GM10248 (cell line): ENCODE measurements at regions of chr5 and their contacts with region 1.

Region 1: DNA sequence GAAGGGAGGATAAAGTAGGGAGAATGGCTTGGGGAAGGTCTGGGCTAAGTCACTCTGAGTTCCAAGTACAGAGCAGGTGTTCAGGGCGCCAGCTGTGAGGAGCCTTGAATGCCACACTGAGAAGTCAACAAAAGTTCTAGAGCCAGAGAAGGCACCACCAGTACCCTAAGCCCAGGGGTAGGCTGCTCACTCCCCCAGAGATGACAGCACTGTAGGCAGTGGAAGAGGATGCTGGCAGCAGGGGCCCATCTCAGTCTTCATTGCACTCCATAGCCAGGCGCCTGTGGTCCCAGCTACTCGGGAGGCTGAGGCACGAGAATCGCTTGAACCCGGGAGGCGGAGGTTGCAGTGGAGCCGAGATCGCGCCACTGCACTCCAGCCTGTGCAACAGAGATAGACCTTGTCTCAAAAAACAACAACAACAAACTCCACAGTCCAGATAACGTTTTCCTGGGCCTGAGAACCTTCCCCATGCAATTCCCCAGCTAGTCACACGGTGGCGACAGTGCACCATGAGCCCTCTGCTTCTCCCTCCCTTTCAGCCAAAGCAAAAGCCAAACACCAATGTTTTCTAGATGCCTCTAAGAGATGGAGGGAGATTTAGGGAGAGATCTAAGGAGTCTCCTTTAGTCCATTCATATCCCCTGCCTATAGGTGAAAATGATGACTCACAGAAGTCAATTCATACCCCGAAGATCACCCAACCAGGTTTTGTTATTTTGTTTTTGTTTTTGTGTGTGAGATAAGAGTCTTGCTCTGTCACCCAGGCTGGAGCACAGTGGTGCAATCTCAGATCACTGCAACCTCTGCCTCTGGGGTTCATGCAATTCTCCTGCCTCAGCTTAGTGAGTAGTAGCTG is 19.8 kb upstream of the NSD1 start:
- DNase-seq: peak; percentile 91
- CTCF ChIP-seq: peak; percentile 97

Region 2: GRCh38 chr5:177077335-177077734 is 36.5 kb before region 1 on chr5:
- CTCF ChIA-PET with region 1: interaction called, 112 read pairs
- POLR2A ChIA-PET with region 1: no interaction called
- DNase-seq: no peak
- CTCF ChIP-seq: no peak

Region 3: GRCh38 chr5:177124486-177124991 is 10.7 kb after region 1 on chr5:
- CTCF ChIA-PET with region 1: interaction called, 26 read pairs
- POLR2A ChIA-PET with region 1: no interaction called
- DNase-seq: peak; percentile 54
- CTCF ChIP-seq: no peak

Region 4: GRCh38 chr5:177311723-177312648 is 198.2 kb after region 1 on chr5 and contains the start of gene MXD3:
- CTCF ChIA-PET with region 1: interaction called, 47 read pairs
- POLR2A ChIA-PET with region 1: no interaction called
- DNase-seq: peak; percentile 98
- CTCF ChIP-seq: no peak

Region 5: GRCh38 chr5:177390363-177391300 is 276.8 kb after region 1 on chr5:
- CTCF ChIA-PET with region 1: interaction called, 31 read pairs
- POLR2A ChIA-PET with region 1: no interaction called
- DNase-seq: peak; percentile 91
- CTCF ChIP-seq: peak; percentile 90

Region 6: DNA sequence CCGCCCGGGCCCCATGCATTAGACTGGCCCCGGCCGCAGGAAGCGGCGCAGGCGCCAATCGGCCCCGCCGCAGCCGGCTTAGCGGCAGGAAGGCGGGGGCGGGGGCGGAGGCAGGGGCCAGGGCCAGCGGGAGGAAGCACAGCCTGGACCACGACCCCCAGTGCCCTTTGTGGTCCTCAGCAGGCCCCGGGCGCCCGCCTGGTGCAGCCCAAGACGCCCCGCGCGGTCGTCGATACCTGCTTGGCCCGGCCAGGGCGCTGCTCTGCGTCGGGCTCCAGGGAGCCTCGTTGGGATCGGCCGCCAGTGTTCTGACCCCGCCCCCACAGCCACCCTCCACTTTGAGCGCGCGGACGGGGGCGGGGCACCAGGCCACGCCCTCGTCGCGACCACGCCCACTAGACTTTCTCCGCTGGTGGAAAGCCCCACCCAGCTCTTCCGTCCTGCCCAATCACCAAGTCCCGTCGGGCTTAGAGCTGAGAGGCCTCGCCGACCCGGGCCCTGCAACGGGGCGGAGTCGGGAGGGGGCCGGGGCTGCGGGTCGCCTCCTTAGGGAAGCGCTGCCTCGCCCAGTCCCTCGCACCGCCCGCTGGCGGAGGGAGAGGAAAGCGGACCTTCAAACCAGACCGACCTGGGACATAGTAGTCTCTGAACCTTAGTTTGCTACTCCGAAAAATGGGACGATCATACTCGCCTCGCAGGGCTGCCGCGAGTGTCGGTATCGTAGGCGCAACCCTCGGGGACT is 383.7 kb after region 1 on chr5 and contains the start of gene PDLIM7:
- CTCF ChIA-PET with region 1: interaction called, 12 read pairs
- POLR2A ChIA-PET with region 1: no interaction called
- DNase-seq: peak; percentile 97
- CTCF ChIP-seq: no peak